BJ (cell line): ENCODE measurements at regions of chr17 and their contacts with region 1.

Region 1: DNA sequence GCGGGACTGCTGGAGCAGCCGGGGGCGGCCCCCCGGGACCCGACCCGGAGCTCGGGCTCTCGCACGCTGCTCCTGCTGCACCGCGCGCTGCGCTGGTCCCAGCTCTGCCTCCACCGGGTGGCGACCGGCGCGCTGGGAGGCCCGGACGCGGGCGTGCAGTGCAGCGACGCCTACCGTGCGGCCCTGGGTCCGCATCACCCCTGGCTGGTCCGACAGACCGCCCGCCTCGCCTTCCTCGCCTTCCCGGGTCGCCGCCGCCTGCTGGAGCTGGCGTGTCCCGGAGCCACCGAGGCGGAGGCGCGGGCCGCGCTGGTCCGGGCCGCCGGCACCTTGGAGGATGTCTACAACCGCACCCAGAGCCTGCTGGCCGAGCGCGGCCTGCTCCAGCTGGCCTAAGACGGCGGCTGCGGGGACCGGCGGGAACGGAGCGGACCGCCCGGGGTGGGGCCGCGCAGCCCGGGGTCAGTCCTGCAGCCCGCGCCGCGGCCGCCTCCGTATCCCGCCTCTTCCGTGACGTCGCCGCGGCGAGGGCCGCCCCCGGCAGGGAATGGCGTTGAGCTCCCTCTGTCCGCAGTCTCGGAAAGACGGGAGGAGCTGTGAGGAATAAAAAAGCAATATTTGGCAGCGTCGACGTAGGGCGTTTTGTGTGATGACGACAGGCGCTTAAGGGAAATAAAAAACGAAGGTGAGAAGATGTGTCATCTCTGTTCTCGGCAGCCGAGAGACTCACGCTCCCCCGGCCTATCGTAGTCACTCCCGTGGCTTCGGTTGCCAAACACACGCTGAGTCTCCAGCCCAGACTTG is 1.3 kb downstream of the GLTPD2 start:
- DNase-seq: peak; percentile 36
- H3K4me3 ChIP-seq: peak overlapping the region; percentile 69
- H3K27me3 ChIP-seq: peaks cover 7% of the 10 kb centered on the region
- CTCF ChIP-seq: peak; percentile 62

Region 2: GRCh38 chr17:4492721-4493561 is 297.2 kb before region 1 on chr17:
- CTCF ChIA-PET with region 1: no interaction called
- POLR2A ChIA-PET with region 1: no interaction called
- DNase-seq: no peak
- H3K4me3 ChIP-seq: no peak overlapping the region
- H3K27me3 ChIP-seq: peaks cover 5% of the 10 kb centered on the region
- CTCF ChIP-seq: no peak

Region 3: DNA sequence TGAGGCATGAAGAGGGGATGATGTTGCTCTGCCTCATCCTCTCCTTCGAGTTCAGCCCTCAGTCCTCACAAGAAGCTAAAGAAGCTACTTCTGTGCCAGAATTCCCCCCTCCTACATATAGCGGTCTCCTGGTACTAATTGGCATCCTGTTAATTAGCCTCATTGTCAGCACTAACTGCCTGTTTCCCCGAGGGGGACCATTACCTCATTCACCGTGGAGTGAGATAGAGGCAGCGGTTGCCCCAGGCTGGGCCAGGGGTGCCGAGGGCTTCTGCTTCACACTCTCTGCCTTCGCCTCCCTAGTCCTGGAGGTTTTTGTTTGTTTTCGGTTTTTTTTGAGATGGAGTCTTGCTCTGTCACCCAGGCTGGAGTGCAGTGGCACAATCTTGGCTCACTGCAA is 37.3 kb after region 1 on chr17:
- CTCF ChIA-PET with region 1: no interaction called
- POLR2A ChIA-PET with region 1: no interaction called
- DNase-seq: no peak
- H3K4me3 ChIP-seq: no peak overlapping the region
- H3K27me3 ChIP-seq: no peaks in the 10 kb centered on the region
- CTCF ChIP-seq: no peak

Region 4: DNA sequence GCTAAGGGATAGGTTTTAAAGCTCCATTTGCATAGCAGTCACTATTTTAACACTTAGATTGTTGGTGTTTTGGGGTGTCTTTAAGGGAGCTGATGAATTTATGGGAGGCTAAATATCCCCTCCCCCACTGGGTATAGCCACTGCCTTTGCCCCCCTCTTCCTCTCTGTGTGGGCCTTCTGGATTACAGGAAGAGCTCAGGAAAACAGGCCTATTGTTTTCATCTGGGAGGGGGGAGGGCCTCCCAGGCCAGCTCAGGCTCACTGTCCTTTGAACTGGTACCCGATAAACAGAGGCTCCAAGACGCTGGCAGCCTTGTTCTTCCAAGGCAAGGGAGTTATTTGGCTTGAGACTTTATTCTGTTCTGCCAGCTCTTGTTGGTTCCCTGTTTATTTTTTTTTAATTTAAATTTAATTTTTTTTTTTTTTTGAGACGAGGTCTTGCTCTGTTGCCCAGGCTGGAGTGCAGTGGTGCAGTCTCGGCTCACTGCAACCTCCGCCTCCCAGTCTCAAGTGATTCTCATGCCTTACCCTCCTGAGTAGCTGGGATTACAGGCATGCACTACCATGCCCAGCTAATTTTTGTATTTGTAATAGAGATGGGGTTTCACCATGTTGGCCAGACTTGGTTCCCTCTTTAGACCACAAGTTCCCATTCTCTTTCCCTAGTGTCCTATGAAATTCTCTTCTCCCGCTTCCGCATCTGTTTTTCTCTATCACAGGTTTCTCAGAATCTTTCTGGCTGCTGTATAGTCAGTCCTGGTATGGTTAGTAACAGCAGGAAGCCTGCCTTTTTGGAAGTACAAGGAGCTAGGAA is 68.2 kb after region 1 on chr17:
- CTCF ChIA-PET with region 1: interaction called, 10 read pairs
- POLR2A ChIA-PET with region 1: no interaction called
- DNase-seq: no peak
- H3K4me3 ChIP-seq: no peak overlapping the region
- H3K27me3 ChIP-seq: no peaks in the 10 kb centered on the region
- CTCF ChIP-seq: no peak

Region 5: GRCh38 chr17:4881761-4882555 is 91.9 kb after region 1 on chr17:
- CTCF ChIA-PET with region 1: interaction called, 112 read pairs
- POLR2A ChIA-PET with region 1: no interaction called
- DNase-seq: no peak
- H3K4me3 ChIP-seq: no peak overlapping the region
- H3K27me3 ChIP-seq: no peaks in the 10 kb centered on the region
- CTCF ChIP-seq: peak; percentile 87

Region 6: GRCh38 chr17:4891411-4892342 is 101.6 kb after region 1 on chr17:
- CTCF ChIA-PET with region 1: interaction called, 112 read pairs
- POLR2A ChIA-PET with region 1: no interaction called
- DNase-seq: no peak
- H3K4me3 ChIP-seq: no peak overlapping the region
- H3K27me3 ChIP-seq: no peaks in the 10 kb centered on the region
- CTCF ChIP-seq: no peak

Region 7: DNA sequence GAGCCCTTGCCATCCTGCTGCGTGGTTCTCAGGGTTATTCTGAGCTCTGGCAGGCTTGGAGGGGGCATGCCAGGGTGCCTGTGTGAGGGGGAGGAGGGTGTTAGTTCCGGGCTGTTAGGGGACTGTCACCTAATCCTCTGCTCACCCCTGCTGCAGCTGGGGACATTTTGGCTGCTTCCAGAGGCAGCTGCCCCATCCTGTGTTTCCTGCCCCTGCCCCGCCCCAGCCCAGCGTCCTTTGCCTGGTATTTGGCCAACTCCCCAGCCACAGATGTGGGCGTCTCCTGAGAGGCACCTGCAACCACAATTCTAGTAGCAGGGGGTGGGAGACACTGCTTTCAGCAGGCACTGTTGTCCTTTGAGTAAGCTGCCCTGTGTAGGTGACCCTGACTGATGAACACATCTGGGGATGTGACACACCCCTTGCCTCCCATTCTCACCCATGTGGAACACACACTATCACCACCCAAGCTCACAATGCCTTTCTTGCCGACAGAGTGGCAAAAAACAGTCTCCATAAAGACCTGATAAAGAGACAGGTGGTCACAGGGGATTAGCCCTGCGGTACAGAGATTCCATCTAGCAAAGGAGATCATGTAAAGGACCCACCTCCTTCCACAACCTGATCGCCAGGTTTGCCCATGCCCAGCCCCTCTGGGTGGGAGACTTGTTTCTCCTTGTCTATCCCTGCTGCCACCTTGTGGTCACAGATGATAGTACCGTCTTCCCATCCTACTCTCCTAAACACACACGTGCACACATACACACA is 113.1 kb after region 1 on chr17 and contains the start of gene CHRNE:
- CTCF ChIA-PET with region 1: interaction called, 21 read pairs
- POLR2A ChIA-PET with region 1: no interaction called
- DNase-seq: no peak
- H3K4me3 ChIP-seq: no peak within 1 kb of the TSS
- H3K27me3 ChIP-seq: no peaks in the 10 kb centered on the region
- CTCF ChIP-seq: peak; percentile 82
- polyA plus RNA-seq, gene CHRNE: 0.18 and 0.36 TPM in 2 replicates

Region 8: GRCh38 chr17:5031365-5032082 is 241.4 kb after region 1 on chr17:
- CTCF ChIA-PET with region 1: no interaction called
- POLR2A ChIA-PET with region 1: interaction called, 10 read pairs
- DNase-seq: no peak
- H3K4me3 ChIP-seq: peak overlapping the region; percentile 36
- H3K27me3 ChIP-seq: 0 out of 2 replicates have a peak, but pooled peaks cover 6% of the 10 kb centered on the region
- CTCF ChIP-seq: peak; percentile 86